Right ventricle myocardium inferior (tissue), 1 donor: ENCODE measurements at regions of chr2 and their contacts with region 1.

Region 1: DNA sequence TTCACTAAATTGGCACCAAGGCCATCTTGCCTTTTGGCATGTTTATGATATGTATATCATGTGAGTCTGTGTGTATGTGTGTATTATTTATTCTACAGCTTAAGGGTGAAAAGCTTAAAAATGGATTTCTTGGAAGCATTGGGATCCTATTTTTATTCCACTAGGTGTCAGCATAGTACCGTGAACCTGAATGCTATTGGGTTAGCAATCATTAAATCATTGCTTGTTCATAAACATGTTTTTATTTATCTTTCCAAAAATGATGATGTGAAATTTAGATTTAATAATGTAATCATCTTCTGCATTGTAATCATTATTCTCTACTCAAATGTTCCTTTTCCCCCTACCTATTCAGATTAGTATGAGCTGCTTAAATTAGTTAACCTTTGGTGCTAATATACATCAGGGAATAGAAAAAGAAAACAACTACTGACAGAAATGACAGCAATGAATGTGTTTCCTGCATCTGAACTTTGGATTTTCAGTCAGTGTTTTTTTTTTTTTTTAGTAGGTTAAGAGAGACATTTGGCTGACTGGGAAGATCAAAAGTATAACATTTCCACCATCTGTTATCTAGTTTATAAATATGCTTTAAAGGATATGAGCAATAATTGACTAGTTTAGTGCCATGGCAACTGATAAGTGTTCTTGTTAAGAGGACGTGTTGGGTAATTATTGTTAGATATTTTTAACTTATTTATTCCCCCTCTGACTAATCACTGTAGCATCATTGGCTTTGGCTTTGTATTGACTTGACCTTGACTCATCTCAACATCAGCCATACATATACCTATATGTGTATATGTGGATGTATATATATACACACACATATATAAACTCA is 14.1 kb upstream of the ZSWIM2 start:
- DNase-seq: no peak
- ATAC-seq: peak; percentile 37

Region 2: GRCh38 chr2:186780701-186781348 is 82.3 kb before region 1 on chr2:
- intact Hi-C with region 1: no loop called
- DNase-seq: no peak
- ATAC-seq: no peak

Region 3: GRCh38 chr2:187299122-187299906 is 436.2 kb after region 1 on chr2:
- intact Hi-C with region 1: loop called (anchors 10 kb)
- DNase-seq: no peak
- ATAC-seq: peak; percentile 42

Region 4: GRCh38 chr2:187453078-187453641 is 590.1 kb after region 1 on chr2:
- intact Hi-C with region 1: loop called (anchors 2 kb)
- DNase-seq: no peak
- ATAC-seq: no peak

Region 5: GRCh38 chr2:187644981-187645380 is 781.9 kb after region 1 on chr2:
- intact Hi-C with region 1: no loop called
- DNase-seq: no peak
- ATAC-seq: no peak